T-cell (primary cell): ENCODE measurements at regions of chr3 and their contacts with region 1.

Region 1: GRCh38 chr3:133448478-133449122 is 48.7 kb downstream of the BFSP2 start:
- DNase-seq: peak in 19 of 35 experiments; percentile 2 to 40 (median 13)
- ATAC-seq: peak; percentile 56 to 67 (median 65)
- H3K4me3 ChIP-seq: no peak overlapping the region
- H3K4me3 Mint-ChIP-seq: peak overlapping the region in 2 of 3 donors; percentile 2 to 7
- H3K27ac ChIP-seq: peak overlapping the region; percentile 34
- H3K27ac Mint-ChIP-seq: peak overlapping the region; percentile 86 to 89
- H3K4me1 ChIP-seq: peaks cover 0 to 9% of the 10 kb centered on the region in 2 experiments
- H3K4me1 Mint-ChIP-seq: peaks cover 21 to 34% (median 26%) of the 10 kb centered on the region in 3 donors
- H3K27me3 ChIP-seq: no peaks in the 10 kb centered on the region
- H3K27me3 Mint-ChIP-seq: no peaks in the 10 kb centered on the region

Region 2: GRCh38 chr3:133054571-133054970 is 394.0 kb before region 1 on chr3:
- CTCF ChIA-PET with region 1: no interaction called
- POLR2A ChIA-PET with region 1: no interaction called
- DNase-seq: no peak
- ATAC-seq: no peak
- H3K4me3 ChIP-seq: no peak overlapping the region
- H3K4me3 Mint-ChIP-seq: no peak overlapping the region
- H3K27ac ChIP-seq: no peak overlapping the region
- H3K27ac Mint-ChIP-seq: no peak overlapping the region
- H3K4me1 ChIP-seq: no peaks in the 10 kb centered on the region
- H3K4me1 Mint-ChIP-seq: no peaks in the 10 kb centered on the region
- H3K27me3 ChIP-seq: peaks cover 0 to 2% of the 10 kb centered on the region in 2 experiments
- H3K27me3 Mint-ChIP-seq: peaks cover 3 to 18% of the 10 kb centered on the region in 2 donors

Region 3: DNA sequence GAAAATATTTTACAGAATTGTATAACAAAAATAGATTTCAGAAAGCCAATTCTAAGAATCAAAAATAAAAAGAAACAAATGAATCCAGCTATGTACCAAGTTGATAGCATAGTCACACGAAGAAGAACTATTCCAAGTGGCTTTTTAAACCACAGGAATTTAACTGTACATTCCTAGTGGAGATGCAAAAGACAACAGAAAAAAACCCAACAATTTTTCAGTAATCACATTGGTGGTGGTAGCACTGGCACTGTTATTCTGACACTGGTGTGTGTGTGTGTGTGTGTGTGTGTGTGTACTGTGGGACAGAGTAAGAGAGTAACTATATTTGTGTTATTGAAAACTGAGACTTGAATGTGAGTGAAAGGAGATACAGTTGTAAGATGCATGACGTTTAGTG is 39.6 kb before region 1 on chr3:
- CTCF ChIA-PET with region 1: no interaction called
- POLR2A ChIA-PET with region 1: no interaction called
- DNase-seq: no peak
- ATAC-seq: no peak
- H3K4me3 ChIP-seq: no peak overlapping the region
- H3K4me3 Mint-ChIP-seq: no peak overlapping the region
- H3K27ac ChIP-seq: no peak overlapping the region
- H3K27ac Mint-ChIP-seq: no peak overlapping the region
- H3K4me1 ChIP-seq: peaks cover 0 to 5% of the 10 kb centered on the region in 2 experiments
- H3K4me1 Mint-ChIP-seq: peaks cover 7 to 12% (median 10%) of the 10 kb centered on the region in 3 donors
- H3K27me3 ChIP-seq: peaks cover 0 to 6% of the 10 kb centered on the region in 2 experiments
- H3K27me3 Mint-ChIP-seq: peaks cover 0 to 19% of the 10 kb centered on the region in 2 donors

Region 4: GRCh38 chr3:133563186-133563591 is 114.6 kb after region 1 on chr3:
- CTCF ChIA-PET with region 1: no interaction called
- POLR2A ChIA-PET with region 1: interaction called in 1 of 2 experiments, 10 read pairs
- DNase-seq: no peak
- ATAC-seq: no peak
- H3K4me3 ChIP-seq: no peak overlapping the region
- H3K4me3 Mint-ChIP-seq: no peak overlapping the region
- H3K27ac ChIP-seq: no peak overlapping the region
- H3K27ac Mint-ChIP-seq: no peak overlapping the region
- H3K4me1 ChIP-seq: no peaks in the 10 kb centered on the region
- H3K4me1 Mint-ChIP-seq: no peaks in the 10 kb centered on the region
- H3K27me3 ChIP-seq: no peaks in the 10 kb centered on the region
- H3K27me3 Mint-ChIP-seq: no peaks in the 10 kb centered on the region